ENCODE measurements at regions of chr9 and their contacts with region 1.

Region 1: DNA sequence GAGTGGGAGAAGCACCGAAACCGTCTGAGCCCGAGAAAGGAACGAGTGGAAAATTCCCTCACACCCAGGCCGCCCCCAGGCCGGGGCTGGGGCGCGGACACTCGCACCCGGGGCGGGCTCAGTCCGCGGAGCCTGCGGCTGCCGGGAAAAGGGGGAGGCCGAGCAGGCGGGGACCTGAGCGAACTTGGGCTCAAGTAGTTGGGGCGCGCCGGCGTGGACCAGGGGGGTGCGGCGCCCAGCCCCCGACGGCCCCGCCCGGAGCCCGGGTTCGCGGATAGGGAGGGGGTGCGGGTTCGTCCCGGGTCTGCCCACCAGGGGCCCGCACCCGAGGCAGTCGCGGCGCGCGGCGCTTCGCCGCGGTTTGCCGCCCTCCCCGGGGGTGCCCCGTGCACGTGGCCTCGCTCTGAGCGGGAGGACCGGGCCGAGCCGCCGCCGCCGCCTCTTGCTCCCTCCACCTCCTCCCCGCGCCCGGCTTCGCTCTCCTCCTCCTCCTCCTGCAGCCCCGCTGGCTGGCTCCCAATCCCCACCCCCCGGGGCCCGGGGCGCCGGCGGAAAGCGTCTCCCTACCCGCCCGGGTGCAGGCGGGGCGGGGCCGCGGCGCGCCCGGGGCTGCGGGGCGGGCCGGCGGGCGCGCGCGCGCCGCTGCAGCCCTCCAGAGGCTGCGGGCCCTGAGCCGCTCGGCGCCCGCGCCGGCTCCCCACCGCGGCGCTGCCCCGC is 1.1 kb upstream of the NFIB start:
- DNase-seq: peak; percentile 43
- ATAC-seq: peak; percentile 45
- H3K4me3 Mint-ChIP-seq: peak overlapping the region; percentile 62
- H3K27ac Mint-ChIP-seq: no peak overlapping the region
- H3K4me1 Mint-ChIP-seq: peaks cover 17% of the 10 kb centered on the region
- H3K27me3 Mint-ChIP-seq: peaks cover 54% of the 10 kb centered on the region

Region 2: GRCh38 chr9:14347406-14348122 is 32.5 kb after region 1 on chr9:
- CTCF ChIA-PET with region 1: no interaction called
- POLR2A ChIA-PET with region 1: no interaction called
- intact Hi-C with region 1: loop called (anchors 1 to 2 kb)
- DNase-seq: no peak
- ATAC-seq: no peak
- H3K4me3 Mint-ChIP-seq: no peak overlapping the region
- H3K27ac Mint-ChIP-seq: no peak overlapping the region
- H3K4me1 Mint-ChIP-seq: peaks cover 7% of the 10 kb centered on the region
- H3K27me3 Mint-ChIP-seq: peaks cover 59% of the 10 kb centered on the region

Measured in activated CD4-positive, alpha-beta T cell treated with anti-CD3 and anti-CD28 coated beads for 36 hours (primary cell).